Esophagus muscularis mucosa (tissue), 4 donors: ENCODE measurements at regions of chr1 and their contacts with region 1.

Region 1: GRCh38 chr1:21200767-21201166 is 24.1 kb upstream of the EIF4G3 start:
- DNase-seq: no peak
- H3K4me3 ChIP-seq: no peak overlapping the region
- H3K27ac ChIP-seq: no peak overlapping the region
- H3K4me1 ChIP-seq: no peaks in the 10 kb centered on the region
- H3K27me3 ChIP-seq: no peaks in the 10 kb centered on the region
- CTCF ChIP-seq: no peak
- EP300 ChIP-seq: no peak
- POLR2A ChIP-seq: no peak

Region 2: DNA sequence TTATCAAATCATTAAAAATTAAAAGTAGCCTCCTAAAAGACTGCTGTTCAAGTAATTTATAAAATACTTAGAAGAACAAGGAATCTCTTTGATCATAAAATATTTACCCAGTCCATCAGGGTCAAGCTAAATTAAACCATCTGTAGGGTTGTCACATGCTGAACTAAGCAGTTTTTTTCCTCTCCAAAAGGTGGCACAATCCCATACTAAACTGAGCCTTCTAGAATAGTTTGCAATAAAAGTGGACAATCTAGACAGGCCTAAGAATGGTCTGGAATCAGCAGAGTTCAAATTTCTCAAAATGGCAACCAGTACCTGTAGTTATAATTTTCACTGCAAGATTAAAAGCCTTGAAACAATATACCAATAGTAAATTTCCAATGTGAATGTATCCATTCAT is 218.9 kb before region 1 on chr1:
- intact Hi-C with region 1: loop called (anchors 5 kb)
- DNase-seq: no peak
- H3K4me3 ChIP-seq: no peak overlapping the region
- H3K27ac ChIP-seq: no peak overlapping the region
- H3K4me1 ChIP-seq: peaks cover 0 to 6% (median 4%) of the 10 kb centered on the region in 4 donors
- H3K27me3 ChIP-seq: no peaks in the 10 kb centered on the region
- CTCF ChIP-seq: peak; percentile 42 to 51 (median 44)
- EP300 ChIP-seq: no peak
- POLR2A ChIP-seq: no peak